ENCODE measurements at regions of chrX and their contacts with region 1.

Region 1: DNA sequence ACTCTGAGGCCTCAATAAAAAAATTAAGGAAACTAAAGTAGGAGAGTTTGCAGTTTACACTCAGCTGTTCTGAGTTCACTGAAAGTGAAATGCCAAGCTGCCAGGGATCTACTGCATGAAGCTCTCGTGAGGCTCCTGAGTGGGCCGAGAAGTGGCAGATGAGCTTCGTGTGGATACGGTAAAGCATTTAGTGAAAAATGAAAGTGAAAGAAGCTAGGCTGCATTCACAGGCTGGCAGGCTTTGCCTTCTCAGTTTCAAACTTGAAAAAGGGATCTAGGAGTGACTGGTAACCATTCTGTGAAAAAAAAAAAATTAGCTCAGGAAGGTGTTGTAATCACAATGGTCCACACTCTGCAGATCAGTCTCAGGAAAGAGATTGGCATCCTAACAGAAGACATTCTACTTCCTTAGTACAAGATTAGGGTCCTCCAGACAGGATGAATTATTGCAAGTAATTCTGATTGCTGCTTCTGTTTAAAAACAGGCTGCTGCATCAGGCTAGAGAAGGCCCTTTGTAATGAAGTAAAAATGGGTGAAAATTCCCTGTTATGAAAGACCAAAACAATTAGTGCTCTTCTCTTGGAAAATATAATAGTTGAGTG is 679.9 kb downstream of the RPA4 start:
- DNase-seq: peak; percentile 15
- ATAC-seq: peak; percentile 97
- H3K4me3 Mint-ChIP-seq: peak overlapping the region; percentile 77
- H3K27ac Mint-ChIP-seq: peak overlapping the region; percentile 84
- H3K4me1 Mint-ChIP-seq: peaks cover 10% of the 10 kb centered on the region
- H3K27me3 Mint-ChIP-seq: no peaks in the 10 kb centered on the region
- CTCF ChIP-seq: no peak

Region 2: GRCh38 chrX:96835660-96836289 is 727.9 kb before region 1 on chrX:
- CTCF ChIA-PET with region 1: no interaction called
- POLR2A ChIA-PET with region 1: interaction called, 3 read pairs
- intact Hi-C with region 1: loop called (anchors 5 kb)
- DNase-seq: peak; percentile 24
- ATAC-seq: peak; percentile 87
- H3K4me3 Mint-ChIP-seq: peak overlapping the region; percentile 57
- H3K27ac Mint-ChIP-seq: peak overlapping the region; percentile 88
- H3K4me1 Mint-ChIP-seq: peaks cover 23% of the 10 kb centered on the region
- H3K27me3 Mint-ChIP-seq: no peaks in the 10 kb centered on the region
- CTCF ChIP-seq: no peak

Measured in activated B cell treated with CpG ODN at 0.5 μM for 24 hours (primary cell).